ENCODE measurements at regions of chr17 and their contacts with region 1.

Region 1: DNA sequence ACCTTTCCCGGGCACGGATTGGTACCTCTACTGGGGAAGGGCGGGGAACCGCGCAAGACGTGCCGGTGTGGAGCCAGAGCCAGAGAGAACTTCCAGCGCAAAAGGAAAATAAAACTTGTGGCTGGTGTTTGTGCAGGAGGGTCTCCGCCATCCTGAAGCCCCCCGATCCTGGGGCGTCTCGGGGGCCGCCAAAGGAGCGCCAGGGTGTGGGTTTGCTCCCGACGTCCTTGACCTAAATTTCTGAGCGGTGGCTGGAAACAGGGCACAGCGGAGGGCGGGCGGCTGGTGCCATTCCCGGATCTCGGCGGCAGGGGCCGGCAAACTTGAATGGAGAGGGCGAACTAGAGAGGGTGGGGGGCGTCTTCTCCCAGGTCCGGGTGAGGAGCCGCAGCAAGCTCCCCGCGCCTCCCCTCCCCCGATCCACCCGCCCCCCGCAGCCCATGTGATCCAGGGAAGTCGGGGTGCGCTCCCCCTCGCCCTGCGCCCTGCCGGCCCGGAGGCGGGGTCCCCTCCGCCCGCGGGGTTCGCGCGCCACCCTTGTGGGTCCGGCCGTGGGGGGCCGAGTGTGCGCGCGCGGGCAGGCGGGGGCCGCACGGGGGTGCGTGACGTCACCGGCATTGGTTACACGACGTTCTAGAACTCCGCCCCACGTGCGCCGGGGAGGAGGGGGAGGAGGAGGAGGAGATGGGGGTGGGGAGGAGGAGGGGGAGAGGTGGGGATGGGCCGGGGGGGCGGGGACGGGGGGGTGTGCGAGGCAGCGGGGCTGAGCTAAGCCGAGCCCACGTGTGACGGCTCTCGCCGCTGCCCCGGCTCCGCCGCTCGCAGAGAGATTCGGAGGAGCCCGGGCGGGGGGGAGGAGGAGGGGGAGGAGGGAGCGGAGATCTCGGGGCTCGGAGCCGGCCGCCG is at the start of gene MSI2:
- DNase-seq: peak; percentile 96
- H3K4me3 ChIP-seq: peak within 1 kb of the TSS; percentile 34 to 95 (median 79)
- H3K27ac ChIP-seq: peak within 1 kb of the TSS; percentile 83 to 94 (median 89)
- H3K4me1 ChIP-seq: peaks cover 5 to 18% (median 14%) of the 10 kb centered on the region in 4 donors
- H3K27me3 ChIP-seq: no peaks in the 10 kb centered on the region
- CTCF ChIP-seq: peak in 1 of 5 experiments; percentile 9
- EP300 ChIP-seq: peak; percentile 55
- POLR2A ChIP-seq: peak; percentile 45
- total RNA-seq, gene MSI2: 20.6 to 36.0 (median 29.3) TPM

Region 2: DNA sequence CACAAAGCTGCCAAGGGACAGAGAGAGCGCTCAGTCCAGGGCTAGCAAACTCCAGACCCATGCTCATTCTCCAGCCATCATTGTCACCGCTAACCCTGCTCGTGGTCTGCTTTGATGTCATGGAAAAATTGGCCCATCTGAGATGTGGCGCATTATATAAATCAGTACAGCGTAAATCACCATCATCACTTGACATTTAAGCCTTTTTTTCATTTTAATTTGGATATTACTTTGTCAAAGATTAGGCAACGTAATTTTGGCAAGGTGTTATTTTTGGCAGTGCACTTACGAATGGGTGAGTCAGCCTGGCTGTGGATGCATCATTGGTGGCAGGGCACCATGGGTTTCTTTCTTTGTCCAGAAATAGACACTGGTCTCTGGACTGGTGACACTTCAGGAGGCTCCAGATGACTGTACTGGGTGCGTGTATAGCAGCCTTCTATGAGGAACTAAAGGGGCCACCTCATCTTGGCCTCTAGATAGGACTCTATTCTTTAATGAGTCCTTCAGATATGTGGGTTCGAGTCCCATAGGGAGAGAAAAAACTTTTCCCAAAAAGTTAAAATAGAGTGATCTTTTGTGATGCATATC is 166.6 kb after region 1 on chr17:
- in situ Hi-C with region 1: loop called in 1 of 4 experiments (anchors 25 kb)
- intact Hi-C with region 1: no loop called
- DNase-seq: no peak
- H3K4me3 ChIP-seq: no peak overlapping the region
- H3K27ac ChIP-seq: peak overlapping the region in 1 of 4 donors; percentile 79
- H3K4me1 ChIP-seq: peaks cover 6 to 50% (median 26%) of the 10 kb centered on the region in 4 donors
- H3K27me3 ChIP-seq: no peaks in the 10 kb centered on the region
- CTCF ChIP-seq: no peak
- EP300 ChIP-seq: no peak
- POLR2A ChIP-seq: no peak